CD4-positive, alpha-beta T cell (primary cell): ENCODE measurements at regions of chr3 and their contacts with region 1.

Region 1: DNA sequence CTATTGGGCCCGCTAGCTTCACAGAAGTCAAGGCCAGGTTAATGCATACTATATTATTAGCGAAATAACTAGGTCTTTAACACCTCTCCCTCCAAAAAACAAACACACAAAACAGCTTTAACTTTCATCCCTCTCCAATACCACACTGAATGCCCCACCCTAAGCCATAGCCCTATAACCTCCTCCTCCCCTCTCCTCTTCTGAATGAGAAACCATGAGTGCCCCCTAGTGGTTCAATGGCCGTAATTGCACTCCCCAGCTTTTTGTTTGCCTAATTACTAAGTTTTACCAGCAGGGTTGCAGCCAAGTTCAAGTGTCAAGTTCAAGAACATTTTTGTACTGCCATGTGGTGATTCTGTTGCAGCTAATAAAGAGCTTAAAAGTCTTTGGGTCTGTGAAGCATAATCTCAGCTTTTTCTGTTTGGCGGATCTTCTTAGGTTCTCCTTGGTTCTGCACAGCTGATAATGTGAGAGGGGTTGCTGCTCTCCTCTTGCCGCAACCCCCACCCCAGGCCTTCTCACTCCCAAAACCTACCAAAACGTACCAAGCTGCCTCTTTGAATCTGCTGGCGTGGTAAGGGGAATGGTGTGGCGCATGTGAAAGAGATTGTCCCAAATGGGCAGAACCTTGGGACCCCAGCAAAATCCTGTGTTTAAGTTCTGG is 57.9 kb downstream of the RPL22L1 start:
- DNase-seq: peak; percentile 39 to 80 (median 54)
- ATAC-seq: peak; percentile 96
- H3K4me3 ChIP-seq: no peak overlapping the region
- H3K4me3 Mint-ChIP-seq: no peak overlapping the region
- H3K27ac ChIP-seq: no peak overlapping the region
- H3K27ac Mint-ChIP-seq: no peak overlapping the region
- H3K4me1 ChIP-seq: no peaks in the 10 kb centered on the region
- H3K4me1 Mint-ChIP-seq: no peaks in the 10 kb centered on the region
- H3K27me3 ChIP-seq: no peaks in the 10 kb centered on the region
- H3K27me3 Mint-ChIP-seq: no peaks in the 10 kb centered on the region
- CTCF ChIP-seq: peak; percentile 87

Region 2: DNA sequence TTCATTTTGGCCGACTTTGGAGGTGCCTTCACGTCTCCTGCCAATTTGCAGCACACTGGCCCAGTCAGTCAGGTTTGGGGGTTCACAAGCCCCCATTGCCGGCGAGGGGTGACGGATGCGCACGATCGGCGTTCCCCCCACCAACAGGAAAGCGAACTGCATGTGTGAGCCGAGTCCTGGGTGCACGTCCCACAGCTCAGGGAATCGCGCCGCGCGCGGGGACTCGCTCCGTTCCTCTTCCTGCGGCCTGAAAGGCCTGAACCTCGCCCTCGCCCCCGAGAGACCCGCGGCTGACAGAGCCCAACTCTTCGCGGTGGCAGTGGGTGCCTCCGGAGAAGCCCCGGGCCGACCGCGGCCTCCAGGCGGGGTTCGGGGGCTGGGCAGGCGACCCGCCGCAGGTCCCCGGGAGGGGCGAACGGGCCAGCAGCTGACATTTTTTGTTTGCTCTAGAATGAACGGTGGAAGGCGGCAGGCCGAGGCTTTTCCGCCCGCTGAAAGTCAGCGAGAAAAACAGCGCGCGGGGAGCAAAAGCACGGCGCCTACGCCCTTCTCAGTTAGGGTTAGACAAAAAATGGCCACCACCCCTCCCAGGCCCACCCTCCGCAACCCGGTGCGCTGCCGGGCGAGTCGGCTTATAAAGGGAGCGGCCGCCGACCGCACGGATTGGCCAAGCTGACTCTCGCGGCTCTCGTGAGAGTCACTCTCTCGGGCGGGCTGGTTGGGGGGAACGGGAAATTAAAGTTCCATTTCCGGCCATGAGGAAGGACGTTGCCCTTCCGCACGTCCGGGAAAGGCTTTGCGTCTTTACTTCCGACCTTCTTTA is 1047.4 kb before region 1 on chr3 and contains the start of gene TERC:
- CTCF ChIA-PET with region 1: no interaction called
- POLR2A ChIA-PET with region 1: no interaction called
- intact Hi-C with region 1: loop called in 1 of 2 experiments (anchors 5 kb)
- DNase-seq: peak; percentile 82 to 98 (median 92)
- ATAC-seq: peak; percentile 82
- H3K4me3 ChIP-seq: peak within 1 kb of the TSS; percentile 93
- H3K4me3 Mint-ChIP-seq: peak within 1 kb of the TSS; percentile 98
- H3K27ac ChIP-seq: peak within 1 kb of the TSS; percentile 95 to 96
- H3K27ac Mint-ChIP-seq: peak within 1 kb of the TSS; percentile 97
- H3K4me1 ChIP-seq: peaks cover 27% of the 10 kb centered on the region
- H3K4me1 Mint-ChIP-seq: peaks cover 38% of the 10 kb centered on the region
- H3K27me3 ChIP-seq: no peaks in the 10 kb centered on the region
- H3K27me3 Mint-ChIP-seq: no peaks in the 10 kb centered on the region
- CTCF ChIP-seq: no peak
- total RNA-seq, gene TERC: 9.0 to 10.4 TPM

Region 3: DNA sequence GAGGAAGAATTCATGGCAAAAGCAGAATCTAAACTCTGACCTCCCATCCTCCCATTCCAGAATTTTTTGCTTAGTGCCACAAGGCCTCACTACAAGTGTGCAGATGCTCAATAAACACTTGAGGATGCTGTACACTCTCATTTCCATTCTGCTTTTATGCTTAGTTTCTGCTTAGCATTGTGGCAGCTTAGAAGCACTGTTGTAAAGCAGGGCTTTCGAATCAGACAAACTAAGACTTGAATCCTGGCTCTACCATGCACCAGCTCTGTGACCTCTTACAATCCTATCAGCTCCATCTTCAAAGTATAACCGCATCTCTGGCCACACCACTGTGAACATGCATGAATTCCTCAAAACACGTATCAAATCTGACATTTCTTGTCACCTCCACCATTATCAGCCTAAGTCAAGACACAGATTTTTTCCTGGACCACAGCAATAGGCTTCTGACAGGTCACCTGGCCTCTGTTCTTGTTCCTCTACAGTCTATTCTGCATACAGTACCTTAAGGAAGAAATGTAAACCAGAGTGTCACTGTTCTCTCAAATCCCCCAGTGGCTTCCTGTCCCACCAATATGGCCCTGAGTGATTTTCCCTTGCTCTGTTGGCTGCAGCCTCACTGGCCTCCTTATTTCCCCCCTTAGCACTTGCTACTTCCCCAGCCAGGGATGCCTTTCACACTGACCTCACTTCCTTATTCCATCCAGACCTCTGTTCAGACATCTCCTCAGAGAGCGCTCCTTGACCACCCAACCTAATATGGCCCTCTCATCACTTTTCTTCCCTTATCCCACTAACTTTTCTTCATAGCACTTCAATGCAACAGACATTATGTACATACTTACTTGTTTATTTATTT is 622.4 kb before region 1 on chr3:
- CTCF ChIA-PET with region 1: no interaction called
- POLR2A ChIA-PET with region 1: no interaction called
- intact Hi-C with region 1: loop called (anchors 1 to 5 kb)
- DNase-seq: no peak
- ATAC-seq: peak; percentile 16
- H3K4me3 ChIP-seq: no peak overlapping the region
- H3K4me3 Mint-ChIP-seq: no peak overlapping the region
- H3K27ac ChIP-seq: no peak overlapping the region
- H3K27ac Mint-ChIP-seq: no peak overlapping the region
- H3K4me1 ChIP-seq: peaks cover 10% of the 10 kb centered on the region
- H3K4me1 Mint-ChIP-seq: peaks cover 11% of the 10 kb centered on the region
- H3K27me3 ChIP-seq: no peaks in the 10 kb centered on the region
- H3K27me3 Mint-ChIP-seq: no peaks in the 10 kb centered on the region
- CTCF ChIP-seq: no peak

Region 4: GRCh38 chr3:171436380-171436779 is 624.3 kb after region 1 on chr3:
- CTCF ChIA-PET with region 1: no interaction called
- POLR2A ChIA-PET with region 1: no interaction called
- intact Hi-C with region 1: no loop called
- DNase-seq: no peak
- ATAC-seq: peak; percentile 14
- H3K4me3 ChIP-seq: no peak overlapping the region
- H3K4me3 Mint-ChIP-seq: no peak overlapping the region
- H3K27ac ChIP-seq: no peak overlapping the region
- H3K27ac Mint-ChIP-seq: peak overlapping the region; percentile 19
- H3K4me1 ChIP-seq: peaks cover 25% of the 10 kb centered on the region
- H3K4me1 Mint-ChIP-seq: peaks cover 78% of the 10 kb centered on the region
- H3K27me3 ChIP-seq: no peaks in the 10 kb centered on the region
- H3K27me3 Mint-ChIP-seq: no peaks in the 10 kb centered on the region
- CTCF ChIP-seq: no peak